AG04450 (cell line): ENCODE measurements at regions of chr15 and their contacts with region 1.

Region 1: DNA sequence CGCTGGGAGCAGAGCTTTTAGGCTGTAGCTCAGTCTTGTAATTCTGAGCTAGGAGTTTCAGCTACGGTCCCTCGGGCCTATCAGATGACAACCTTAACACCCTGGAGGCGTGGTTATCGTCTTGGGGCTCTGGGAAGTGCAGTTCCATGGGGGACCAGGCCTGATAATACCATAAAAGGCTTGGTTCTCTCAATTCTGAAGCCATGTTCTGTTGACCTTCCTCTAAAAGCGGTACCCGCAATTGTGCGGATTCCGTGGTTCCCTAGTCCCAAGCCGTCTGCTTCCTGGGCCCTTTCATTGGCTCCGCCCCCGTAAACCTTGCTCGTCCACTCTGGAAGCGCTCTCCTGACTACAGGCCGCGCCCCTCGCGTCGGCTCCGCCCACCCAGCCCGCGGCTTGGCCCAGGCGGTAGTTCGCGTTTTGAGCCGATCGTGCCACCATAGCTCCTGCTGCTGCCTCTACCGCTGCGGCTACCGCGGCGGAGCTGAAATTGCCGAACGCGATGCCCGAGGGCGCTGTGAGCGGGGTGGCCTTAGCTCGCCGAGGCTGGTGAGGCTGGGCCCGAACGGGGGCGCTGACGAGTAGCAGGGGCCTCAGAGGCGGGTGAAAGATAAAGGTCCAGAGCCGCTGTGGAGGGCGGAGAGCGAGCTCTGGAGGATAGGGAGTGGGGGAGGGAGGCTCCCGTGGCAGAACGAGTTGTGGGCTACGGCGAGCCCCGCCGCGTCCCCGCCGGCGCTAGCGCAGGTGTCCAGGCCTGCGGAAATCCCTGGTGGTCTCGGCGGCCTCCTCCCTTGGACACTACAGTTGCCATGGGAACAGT is at the start of gene MAPKBP1:
- DNase-seq: peak; percentile 96
- H3K4me3 ChIP-seq: peak within 1 kb of the TSS; percentile 86
- H3K27ac ChIP-seq: peak within 1 kb of the TSS; percentile 49
- H3K27me3 ChIP-seq: no peaks in the 10 kb centered on the region
- CTCF ChIP-seq: peak; percentile 79
- polyA plus RNA-seq, gene MAPKBP1: 6.1 and 10.3 TPM in 2 replicates

Region 2: DNA sequence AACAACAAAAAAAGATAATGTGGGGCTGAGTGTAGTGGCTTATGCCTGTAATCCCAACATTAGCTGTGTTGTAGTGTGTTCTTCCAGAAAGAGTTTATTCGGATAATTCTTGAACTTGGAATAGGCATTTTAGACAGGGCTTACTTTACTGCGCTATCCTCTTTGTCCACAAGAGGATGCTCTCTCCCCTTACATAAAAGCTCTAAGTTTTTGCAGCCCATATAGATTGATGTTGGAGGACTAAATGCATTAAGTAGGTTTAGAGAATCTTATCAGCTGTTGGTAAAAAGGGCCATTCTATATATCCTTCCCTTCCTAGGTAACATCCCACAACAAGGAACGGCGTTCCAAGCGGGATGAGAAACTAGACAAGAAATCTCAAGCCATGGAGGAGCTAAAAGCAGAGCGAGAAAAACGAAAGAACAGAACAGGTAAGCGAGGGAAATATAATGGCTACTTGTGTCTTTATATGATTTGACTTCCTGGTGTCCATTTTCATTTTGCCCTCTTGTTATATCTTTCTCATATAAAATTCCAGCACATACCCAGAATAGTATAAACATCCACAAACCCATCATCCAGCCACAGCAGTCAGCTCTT is 308.4 kb before region 1 on chr15:
- CTCF ChIA-PET with region 1: interaction called, 10 read pairs
- POLR2A ChIA-PET with region 1: no interaction called
- DNase-seq: peak; percentile 34
- H3K4me3 ChIP-seq: no peak overlapping the region
- H3K27ac ChIP-seq: no peak overlapping the region
- H3K27me3 ChIP-seq: no peaks in the 10 kb centered on the region
- CTCF ChIP-seq: peak; percentile 100

Region 3: GRCh38 chr15:41648770-41649169 is 125.5 kb before region 1 on chr15:
- CTCF ChIA-PET with region 1: no interaction called
- POLR2A ChIA-PET with region 1: no interaction called
- DNase-seq: no peak
- H3K4me3 ChIP-seq: no peak overlapping the region
- H3K27ac ChIP-seq: no peak overlapping the region
- H3K27me3 ChIP-seq: no peaks in the 10 kb centered on the region
- CTCF ChIP-seq: no peak

Region 4: GRCh38 chr15:41756198-41756597 is 18.1 kb before region 1 on chr15:
- CTCF ChIA-PET with region 1: interaction called, 12 read pairs
- POLR2A ChIA-PET with region 1: no interaction called
- DNase-seq: no peak
- H3K4me3 ChIP-seq: no peak overlapping the region
- H3K27ac ChIP-seq: no peak overlapping the region
- H3K27me3 ChIP-seq: no peaks in the 10 kb centered on the region
- CTCF ChIP-seq: no peak

Region 5: GRCh38 chr15:41795996-41796856 is 22.0 kb after region 1 on chr15:
- CTCF ChIA-PET with region 1: interaction called, 362 read pairs
- POLR2A ChIA-PET with region 1: interaction called, 3 read pairs
- DNase-seq: no peak
- H3K4me3 ChIP-seq: no peak overlapping the region
- H3K27ac ChIP-seq: peak overlapping the region; percentile 68
- H3K27me3 ChIP-seq: no peaks in the 10 kb centered on the region
- CTCF ChIP-seq: no peak

Region 6: GRCh38 chr15:41904541-41905005 is 130.3 kb after region 1 on chr15:
- CTCF ChIA-PET with region 1: interaction called, 33 read pairs
- POLR2A ChIA-PET with region 1: no interaction called
- DNase-seq: peak; percentile 15
- H3K4me3 ChIP-seq: no peak overlapping the region
- H3K27ac ChIP-seq: peak overlapping the region; percentile 11
- H3K27me3 ChIP-seq: no peaks in the 10 kb centered on the region
- CTCF ChIP-seq: peak; percentile 90